ENCODE measurements at regions of chr14 and their contacts with region 1.

Region 1: GRCh38 chr14:54902521-54903420 is at the start of gene GCH1:
- DNase-seq: peak; percentile 95
- H3K4me3 Mint-ChIP-seq: peak within 1 kb of the TSS; percentile 90
- H3K27ac Mint-ChIP-seq: peak within 1 kb of the TSS; percentile 88
- H3K4me1 Mint-ChIP-seq: peaks cover 31% of the 10 kb centered on the region
- H3K27me3 Mint-ChIP-seq: no peaks in the 10 kb centered on the region
- total RNA-seq, gene GCH1: 49.8 and 49.9 TPM in 2 replicates

Region 2: DNA sequence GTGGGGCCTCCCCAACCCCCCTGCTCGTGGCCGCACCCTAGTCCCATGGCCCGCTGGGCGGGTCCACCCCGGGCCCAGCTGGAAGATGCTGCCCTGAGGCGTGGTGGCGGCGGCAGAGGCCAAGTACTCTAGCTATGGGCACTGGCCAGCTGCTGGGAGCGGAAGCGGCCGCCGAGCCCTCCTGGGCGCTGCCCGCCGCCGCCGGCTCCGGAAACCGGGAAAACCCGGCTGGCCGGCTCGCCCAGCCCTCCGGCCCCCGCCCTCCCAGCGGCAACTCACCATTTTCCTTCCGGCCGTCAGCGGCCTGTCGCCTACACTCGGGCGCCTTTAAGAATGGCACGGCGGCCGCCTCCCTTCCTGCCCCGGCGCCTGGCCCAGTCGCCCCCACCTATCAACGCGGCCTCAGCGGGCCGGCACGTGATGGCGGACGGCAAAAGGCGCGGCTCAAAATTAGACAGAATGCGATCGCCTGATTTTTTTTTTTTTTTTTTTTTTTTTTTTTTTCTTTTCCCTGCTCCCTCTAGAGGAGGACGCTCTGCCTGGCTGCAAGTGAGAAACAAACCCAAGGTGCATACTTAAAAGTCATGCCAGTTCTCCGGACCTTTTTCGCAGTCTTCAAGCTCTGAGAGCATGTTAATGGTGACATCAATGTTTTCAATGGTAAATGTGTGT is 414.0 kb before region 1 on chr14 and contains the start of gene GMFB:
- intact Hi-C with region 1: loop called (anchors 5 kb)
- DNase-seq: peak; percentile 96
- H3K4me3 Mint-ChIP-seq: peak within 1 kb of the TSS; percentile 89
- H3K27ac Mint-ChIP-seq: peak within 1 kb of the TSS; percentile 86
- H3K4me1 Mint-ChIP-seq: peaks cover 47% of the 10 kb centered on the region
- H3K27me3 Mint-ChIP-seq: peaks cover 3% of the 10 kb centered on the region
- total RNA-seq, gene GMFB: 40.9 and 41.1 TPM in 2 replicates

Region 3: DNA sequence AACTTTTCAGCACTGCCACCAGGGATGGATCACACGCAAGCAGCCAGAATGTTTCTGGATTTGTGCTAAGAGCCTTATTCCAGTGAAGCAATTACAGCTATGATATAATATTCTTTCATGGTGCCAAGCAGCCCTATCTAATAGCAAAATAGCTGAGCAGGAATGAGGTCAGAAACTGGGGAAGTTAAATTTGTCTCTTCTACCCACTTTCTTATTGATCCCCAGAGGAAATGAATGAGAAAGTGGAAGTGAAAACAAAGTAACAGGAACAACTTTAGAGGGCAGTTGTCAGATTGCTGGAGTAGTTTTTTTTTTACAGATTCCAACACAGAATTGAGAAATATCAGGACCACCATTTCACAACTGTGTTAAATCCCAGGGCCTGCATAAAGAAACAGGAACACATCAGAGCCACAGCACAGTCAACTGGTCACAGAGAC is 44.9 kb before region 1 on chr14:
- intact Hi-C with region 1: no loop called
- DNase-seq: no peak
- H3K4me3 Mint-ChIP-seq: no peak overlapping the region
- H3K27ac Mint-ChIP-seq: no peak overlapping the region
- H3K4me1 Mint-ChIP-seq: peaks cover 14% of the 10 kb centered on the region
- H3K27me3 Mint-ChIP-seq: no peaks in the 10 kb centered on the region

Region 4: DNA sequence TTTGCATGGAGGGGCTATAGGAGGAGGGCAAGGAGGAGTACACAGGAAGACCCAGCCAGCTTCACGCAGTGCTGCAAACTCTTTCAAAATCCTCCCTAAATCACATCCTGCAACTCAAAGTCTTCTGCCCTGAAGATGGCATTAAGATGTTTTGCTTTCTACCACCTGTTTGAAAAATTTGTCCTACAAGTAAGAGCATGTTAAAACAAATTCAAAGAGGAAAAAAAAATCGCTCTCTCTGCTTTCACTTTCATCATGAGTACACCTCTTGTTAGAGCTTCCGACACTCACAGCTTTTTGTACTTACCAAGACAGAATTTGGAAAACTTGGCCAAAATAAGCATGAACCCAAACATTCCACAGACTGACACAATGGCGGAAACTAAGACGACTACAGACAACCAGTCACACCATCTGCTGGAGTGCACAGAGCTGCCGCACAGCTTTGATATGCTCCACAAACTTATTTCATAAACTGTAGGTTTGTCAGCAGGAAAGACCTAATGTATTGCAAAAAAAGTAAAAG is 21.5 kb before region 1 on chr14:
- intact Hi-C with region 1: loop called (anchors 1 kb)
- DNase-seq: peak; percentile 81
- H3K4me3 Mint-ChIP-seq: peak overlapping the region; percentile 83
- H3K27ac Mint-ChIP-seq: peak overlapping the region; percentile 90
- H3K4me1 Mint-ChIP-seq: peaks cover 43% of the 10 kb centered on the region
- H3K27me3 Mint-ChIP-seq: no peaks in the 10 kb centered on the region

Region 5: GRCh38 chr14:54974788-54975414 is 72.1 kb after region 1 on chr14:
- intact Hi-C with region 1: no loop called
- DNase-seq: no peak
- H3K4me3 Mint-ChIP-seq: no peak overlapping the region
- H3K27ac Mint-ChIP-seq: no peak overlapping the region
- H3K4me1 Mint-ChIP-seq: peaks cover 6% of the 10 kb centered on the region
- H3K27me3 Mint-ChIP-seq: no peaks in the 10 kb centered on the region

Region 6: DNA sequence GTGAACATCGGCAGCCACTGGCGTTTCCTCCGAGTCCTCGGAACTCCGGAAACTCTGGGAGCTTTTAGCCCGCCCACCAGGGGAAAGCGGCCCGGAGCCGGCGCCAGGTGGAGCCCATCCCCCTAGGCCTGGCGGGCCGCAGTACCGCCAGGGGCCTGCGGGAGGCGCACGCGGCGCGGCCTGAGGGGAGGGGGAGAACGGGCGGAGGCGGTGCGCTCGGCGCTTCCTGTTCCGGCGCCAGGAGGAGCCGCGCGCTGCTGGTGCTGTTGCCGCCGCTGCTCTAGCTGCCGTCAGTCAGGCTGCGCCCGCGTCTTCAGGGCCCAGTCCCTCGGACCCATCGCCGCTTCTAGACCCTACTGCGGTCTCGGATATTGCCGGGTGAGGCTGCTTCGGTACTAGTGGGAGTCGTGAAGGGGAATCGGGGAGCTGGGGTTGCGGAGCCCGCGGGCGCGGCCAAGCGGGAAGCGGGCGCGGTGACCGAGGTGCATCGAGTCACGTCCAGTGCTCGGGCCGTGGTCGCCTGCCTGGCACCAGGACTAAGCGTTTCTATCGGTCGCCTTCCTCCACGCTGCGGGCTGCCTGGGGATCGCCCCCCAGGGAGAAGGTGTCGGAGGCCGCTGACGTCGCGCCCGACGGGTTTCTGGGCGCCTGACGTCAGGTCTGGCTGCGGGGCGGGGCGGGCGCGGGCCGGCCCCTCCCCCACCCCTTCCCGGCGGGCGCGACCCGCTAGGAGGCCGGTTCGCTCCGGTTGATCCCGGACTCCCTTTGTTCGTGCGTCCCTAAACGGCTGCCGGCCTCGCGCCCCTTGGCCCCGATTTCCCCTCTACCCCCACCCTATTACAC is 148.9 kb after region 1 on chr14 and contains the start of gene MAPK1IP1L:
- intact Hi-C with region 1: loop called (anchors 5 kb)
- DNase-seq: peak; percentile 98
- H3K4me3 Mint-ChIP-seq: peak within 1 kb of the TSS; percentile 93
- H3K27ac Mint-ChIP-seq: peak within 1 kb of the TSS; percentile 96
- H3K4me1 Mint-ChIP-seq: peaks cover 36% of the 10 kb centered on the region
- H3K27me3 Mint-ChIP-seq: no peaks in the 10 kb centered on the region
- total RNA-seq, gene MAPK1IP1L: 142 and 144 TPM in 2 replicates